ENCODE measurements at regions of chr1 and their contacts with region 1.

Region 1: DNA sequence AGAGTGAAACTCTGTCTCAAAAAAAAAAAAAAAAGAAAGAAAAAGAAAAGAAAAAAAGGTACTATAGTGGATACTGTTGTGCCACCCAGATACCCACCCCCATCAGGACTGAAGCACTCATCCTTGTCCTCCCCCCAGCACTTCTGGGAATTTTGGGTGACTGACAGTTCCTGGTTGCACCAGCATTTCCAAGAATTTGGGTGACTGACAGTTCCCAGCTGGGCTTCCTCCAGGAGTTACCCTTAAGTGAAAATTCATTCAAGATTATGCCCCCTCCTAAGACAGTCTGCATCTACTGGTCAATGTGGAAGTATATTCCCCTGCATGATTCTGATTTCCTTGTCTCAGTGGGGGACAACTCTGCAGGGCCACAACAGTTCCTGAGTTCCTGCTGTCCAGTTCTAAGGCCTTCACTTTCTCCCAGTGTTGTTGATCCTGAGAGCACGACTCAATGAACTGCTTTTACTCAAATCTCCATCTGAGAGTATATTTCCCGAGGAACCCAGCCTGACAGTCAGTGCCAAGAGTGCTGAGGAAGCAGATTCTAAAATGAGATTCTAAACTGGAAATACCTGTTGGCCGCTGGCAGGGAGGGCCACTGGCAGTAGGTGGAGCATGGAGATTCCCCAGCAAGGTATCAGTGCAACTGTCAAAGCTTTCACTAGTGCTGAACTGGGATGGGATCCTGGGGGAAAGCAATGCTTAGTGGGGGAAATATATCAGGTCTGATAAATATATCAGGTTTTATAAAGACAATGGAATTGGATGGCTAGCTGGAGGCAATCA is 18.5 kb downstream of the RIIAD1 start:
- DNase-seq: no peak
- H3K4me3 ChIP-seq: no peak overlapping the region
- H3K4me3 Mint-ChIP-seq: no peak overlapping the region
- H3K27ac ChIP-seq: no peak overlapping the region
- H3K27ac Mint-ChIP-seq: no peak overlapping the region
- H3K4me1 ChIP-seq: no peaks in the 10 kb centered on the region
- H3K4me1 Mint-ChIP-seq: peaks cover 5% of the 10 kb centered on the region
- H3K27me3 ChIP-seq: peaks cover 4 to 11% of the 10 kb centered on the region in 2 donors
- H3K27me3 Mint-ChIP-seq: peaks cover 15 to 22% (median 16%) of the 10 kb centered on the region in 3 donors
- CTCF ChIP-seq: no peak

Region 2: GRCh38 chr1:151443846-151444782 is 295.7 kb before region 1 on chr1:
- intact Hi-C with region 1: loop called (anchors 2 to 5 kb)
- DNase-seq: peak; percentile 65 to 74 (median 69)
- H3K4me3 ChIP-seq: no peak overlapping the region
- H3K4me3 Mint-ChIP-seq: no peak overlapping the region
- H3K27ac ChIP-seq: peak overlapping the region in 1 of 2 donors; percentile 8
- H3K27ac Mint-ChIP-seq: no peak overlapping the region
- H3K4me1 ChIP-seq: no peaks in the 10 kb centered on the region
- H3K4me1 Mint-ChIP-seq: peaks cover 9% of the 10 kb centered on the region
- H3K27me3 ChIP-seq: no peaks in the 10 kb centered on the region
- H3K27me3 Mint-ChIP-seq: peaks cover 0 to 1% (median 1%) of the 10 kb centered on the region in 3 donors
- CTCF ChIP-seq: peak; percentile 83

Region 3: GRCh38 chr1:151534665-151535278 is 205.0 kb before region 1 on chr1:
- intact Hi-C with region 1: loop called (anchors 2 kb)
- DNase-seq: peak; percentile 62 to 70 (median 68)
- H3K4me3 ChIP-seq: no peak overlapping the region
- H3K4me3 Mint-ChIP-seq: no peak overlapping the region
- H3K27ac ChIP-seq: no peak overlapping the region
- H3K27ac Mint-ChIP-seq: no peak overlapping the region
- H3K4me1 ChIP-seq: peaks cover 7% of the 10 kb centered on the region in 2 donors
- H3K4me1 Mint-ChIP-seq: peaks cover 7% of the 10 kb centered on the region
- H3K27me3 ChIP-seq: no peaks in the 10 kb centered on the region
- H3K27me3 Mint-ChIP-seq: peaks cover 9 to 15% (median 14%) of the 10 kb centered on the region in 3 donors
- CTCF ChIP-seq: peak; percentile 91

Region 4: DNA sequence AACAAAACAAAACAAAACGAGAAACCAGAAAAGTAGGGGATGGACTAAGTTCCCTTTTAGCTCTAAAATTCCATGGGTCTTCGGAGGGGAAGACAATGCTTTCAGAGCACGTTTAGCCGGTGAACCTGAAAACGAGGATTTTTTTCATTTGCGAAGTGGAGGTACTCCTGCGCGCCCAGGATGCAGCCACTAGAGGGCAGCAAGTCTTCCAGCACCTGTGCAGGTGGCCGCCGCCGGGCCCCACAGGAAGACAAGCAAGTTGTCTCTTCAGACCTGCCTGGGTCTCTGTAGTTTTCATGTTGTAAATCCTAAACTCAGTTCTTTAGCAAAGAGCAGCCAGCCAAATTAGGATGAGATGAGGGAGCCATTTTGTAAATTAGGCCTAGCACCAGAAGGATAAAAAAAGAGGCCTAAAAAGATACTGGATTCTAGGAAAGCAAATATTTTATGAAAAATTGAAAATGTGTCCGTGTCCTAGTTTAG is 145.6 kb before region 1 on chr1:
- intact Hi-C with region 1: loop called in 1 of 2 experiments (anchors 2 kb)
- DNase-seq: peak; percentile 49 to 74 (median 68)
- H3K4me3 ChIP-seq: peak overlapping the region; percentile 13 to 63 (median 14)
- H3K4me3 Mint-ChIP-seq: peak overlapping the region; percentile 77 to 90
- H3K27ac ChIP-seq: peak overlapping the region in 1 of 2 donors; percentile 7
- H3K27ac Mint-ChIP-seq: peak overlapping the region in 6 of 7 donors; percentile 64 to 93 (median 74)
- H3K4me1 ChIP-seq: peaks cover 6 to 14% of the 10 kb centered on the region in 2 donors
- H3K4me1 Mint-ChIP-seq: peaks cover 11% of the 10 kb centered on the region
- H3K27me3 ChIP-seq: no peaks in the 10 kb centered on the region
- H3K27me3 Mint-ChIP-seq: peaks cover 0 to 2% (median 0%) of the 10 kb centered on the region in 3 donors
- CTCF ChIP-seq: peak; percentile 93

Region 5: DNA sequence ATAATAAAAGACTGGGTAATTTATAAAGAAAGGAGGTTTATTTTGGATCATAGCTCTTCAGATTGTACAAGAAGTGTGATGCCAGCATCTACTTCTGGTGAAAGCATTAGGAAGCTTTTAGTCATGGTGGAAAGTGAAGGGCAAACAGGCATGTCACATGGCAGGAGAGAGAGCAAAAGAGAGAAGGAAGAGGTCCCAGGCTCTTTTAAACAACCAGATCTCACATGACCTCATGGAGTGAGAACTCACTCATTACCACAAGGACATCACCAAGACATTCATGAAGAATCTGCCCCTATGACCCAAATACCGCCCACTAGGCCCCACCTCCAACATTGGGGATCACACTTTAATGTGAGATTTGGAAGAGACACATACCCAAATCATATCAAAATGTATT is 409.2 kb after region 1 on chr1:
- intact Hi-C with region 1: no loop called
- DNase-seq: no peak
- H3K4me3 ChIP-seq: no peak overlapping the region
- H3K4me3 Mint-ChIP-seq: no peak overlapping the region
- H3K27ac ChIP-seq: no peak overlapping the region
- H3K27ac Mint-ChIP-seq: no peak overlapping the region
- H3K4me1 ChIP-seq: no peaks in the 10 kb centered on the region
- H3K4me1 Mint-ChIP-seq: no peaks in the 10 kb centered on the region
- H3K27me3 ChIP-seq: no peaks in the 10 kb centered on the region
- H3K27me3 Mint-ChIP-seq: peaks cover 4 to 7% (median 5%) of the 10 kb centered on the region in 3 donors
- CTCF ChIP-seq: no peak